ENCODE measurements at regions of chr11 and their contacts with region 1.

Region 1: GRCh38 chr11:36265793-36266628 is 23.2 kb downstream of the COMMD9 start:
- DNase-seq: peak; percentile 42
- ATAC-seq: peak; percentile 90
- H3K4me3 ChIP-seq: no peak overlapping the region
- H3K27ac ChIP-seq: no peak overlapping the region
- H3K4me1 ChIP-seq: no peaks in the 10 kb centered on the region
- H3K27me3 ChIP-seq: peaks cover 26% of the 10 kb centered on the region
- CTCF ChIP-seq: peak; percentile 82
- POLR2A ChIP-seq: no peak
- RAD21 ChIP-seq: peak; percentile 92

Region 2: GRCh38 chr11:35485656-35486322 is 780.2 kb before region 1 on chr11:
- CTCF ChIA-PET with region 1: no interaction called
- POLR2A ChIA-PET with region 1: no interaction called
- dilution Hi-C with region 1: no loop called
- in situ Hi-C with region 1: loop called (anchors 10 kb)
- intact Hi-C with region 1: loop called (anchors 2 kb)
- DNase-seq: peak; percentile 79
- ATAC-seq: peak; percentile 81
- H3K4me3 ChIP-seq: no peak overlapping the region
- H3K27ac ChIP-seq: no peak overlapping the region
- H3K4me1 ChIP-seq: peaks cover 17% of the 10 kb centered on the region
- H3K27me3 ChIP-seq: no peaks in the 10 kb centered on the region
- CTCF ChIP-seq: peak; percentile 90
- POLR2A ChIP-seq: no peak
- RAD21 ChIP-seq: peak; percentile 84

Region 3: DNA sequence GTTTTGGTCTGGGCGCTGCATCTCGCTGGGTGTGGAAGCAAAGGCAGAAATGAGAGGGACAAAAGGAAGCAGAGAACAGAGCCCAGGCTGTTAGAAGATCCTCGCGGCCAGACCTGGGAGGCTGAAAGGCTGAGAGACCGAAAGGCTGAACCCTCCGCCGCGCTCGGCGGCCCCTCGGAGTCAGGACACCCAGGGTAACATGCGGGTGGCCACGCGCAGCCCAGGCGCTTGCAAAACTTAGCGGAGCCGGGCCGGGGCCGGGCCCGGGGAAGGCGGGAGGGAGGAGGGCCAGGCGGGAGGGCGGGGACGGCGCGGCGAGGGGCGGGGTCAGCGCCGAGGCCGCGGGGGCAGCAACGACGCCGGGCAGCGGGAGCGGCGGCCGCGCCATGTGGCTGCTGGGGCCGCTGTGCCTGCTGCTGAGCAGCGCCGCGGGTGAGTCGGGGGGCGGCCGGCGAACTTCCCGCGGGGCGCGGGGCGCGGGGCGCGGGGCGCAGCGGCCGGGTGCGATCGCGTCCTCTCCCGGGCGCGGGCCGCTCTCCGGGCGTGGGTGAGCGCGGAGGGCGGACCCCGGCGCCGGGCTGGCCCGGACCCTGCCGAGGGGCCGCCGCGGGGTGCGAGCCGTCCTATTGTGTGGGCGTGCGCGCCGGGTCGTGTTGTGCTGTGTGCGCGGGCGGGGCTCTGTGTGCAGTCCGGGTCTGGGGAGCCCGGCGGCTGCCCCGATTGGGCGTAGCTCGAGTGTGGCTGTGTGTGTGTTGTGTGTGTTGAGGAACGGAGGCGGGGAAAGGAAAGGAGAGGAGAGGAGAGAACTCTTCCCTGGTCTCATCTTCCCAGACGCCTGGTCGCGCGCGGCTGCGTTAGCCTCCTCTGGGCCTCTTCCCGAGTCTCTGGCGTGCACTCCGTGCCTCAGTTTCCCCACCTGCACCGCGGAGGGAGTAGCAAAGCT is 322.0 kb before region 1 on chr11 and contains the start of gene LDLRAD3:
- CTCF ChIA-PET with region 1: no interaction called
- POLR2A ChIA-PET with region 1: no interaction called
- dilution Hi-C with region 1: no loop called
- in situ Hi-C with region 1: no loop called
- intact Hi-C with region 1: loop called (anchors 10 kb)
- DNase-seq: peak; percentile 82
- ATAC-seq: peak; percentile 94
- H3K4me3 ChIP-seq: peak within 1 kb of the TSS; percentile 71
- H3K27ac ChIP-seq: peak within 1 kb of the TSS; percentile 91
- H3K4me1 ChIP-seq: peaks cover 4% of the 10 kb centered on the region; the same call in 1 of the 2 replicates
- H3K27me3 ChIP-seq: peaks cover 8% of the 10 kb centered on the region
- CTCF ChIP-seq: no peak
- POLR2A ChIP-seq: peak; percentile 17; the same call in 1 of the 2 replicates
- RAD21 ChIP-seq: no peak
- total RNA-seq, gene LDLRAD3: 2.7 and 3.6 TPM in 2 replicates

Region 4: GRCh38 chr11:36015799-36016198 is 250.2 kb before region 1 on chr11:
- CTCF ChIA-PET with region 1: no interaction called
- POLR2A ChIA-PET with region 1: no interaction called
- dilution Hi-C with region 1: no loop called
- in situ Hi-C with region 1: no loop called
- intact Hi-C with region 1: no loop called
- DNase-seq: no peak
- ATAC-seq: peak; percentile 10; the same call in 1 of the 2 replicates
- H3K4me3 ChIP-seq: no peak overlapping the region
- H3K27ac ChIP-seq: no peak overlapping the region
- H3K4me1 ChIP-seq: peaks cover 5% of the 10 kb centered on the region; the same call in 1 of the 2 replicates
- H3K27me3 ChIP-seq: no peaks in the 10 kb centered on the region
- CTCF ChIP-seq: no peak
- POLR2A ChIP-seq: no peak
- RAD21 ChIP-seq: no peak

Region 5: GRCh38 chr11:36034551-36035331 is 231.3 kb before region 1 on chr11:
- CTCF ChIA-PET with region 1: interaction called, 3 read pairs
- POLR2A ChIA-PET with region 1: no interaction called
- dilution Hi-C with region 1: no loop called
- in situ Hi-C with region 1: loop called (anchors 10 kb)
- intact Hi-C with region 1: no loop called
- DNase-seq: peak; percentile 90
- ATAC-seq: peak; percentile 90
- H3K4me3 ChIP-seq: no peak overlapping the region
- H3K27ac ChIP-seq: no peak overlapping the region; the same call in 1 of the 2 replicates
- H3K4me1 ChIP-seq: peaks cover 25% of the 10 kb centered on the region
- H3K27me3 ChIP-seq: no peaks in the 10 kb centered on the region
- CTCF ChIP-seq: no peak
- POLR2A ChIP-seq: no peak
- RAD21 ChIP-seq: peak; percentile 40